ENCODE measurements at regions of chr7 and their contacts with region 1.

Region 1: DNA sequence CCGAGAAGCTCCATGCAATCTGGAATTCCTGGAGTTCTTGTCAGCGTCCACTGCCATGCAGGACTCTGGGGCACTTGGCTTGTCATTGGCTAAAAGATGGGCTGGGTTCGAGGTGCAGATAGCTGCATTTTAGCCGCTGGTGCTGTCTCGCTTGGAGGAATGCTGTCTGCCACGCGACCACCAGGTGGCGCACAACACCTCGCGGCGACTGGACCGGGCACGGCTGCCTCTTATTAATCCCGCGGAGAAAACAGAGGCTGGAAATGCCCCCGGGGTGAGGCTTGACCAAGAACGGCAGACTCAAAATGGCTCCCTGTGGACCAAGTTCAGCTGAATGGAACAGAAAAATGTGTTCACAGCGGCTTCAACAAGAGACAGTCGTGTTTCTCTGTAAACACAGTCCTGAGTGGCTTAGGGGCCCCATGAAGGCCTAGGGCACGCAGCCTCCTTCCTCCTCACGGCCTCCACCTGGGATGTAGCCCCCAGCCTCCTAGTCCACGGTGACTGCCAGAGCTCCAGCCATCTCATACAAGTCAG is 46.2 kb downstream of the AOC1 start:
- DNase-seq: peak; percentile 64
- H3K27ac ChIP-seq: no peak overlapping the region
- CTCF ChIP-seq: peak; percentile 98

Region 2: GRCh38 chr7:150408393-150409299 is 489.9 kb before region 1 on chr7:
- CTCF ChIA-PET with region 1: no interaction called
- POLR2A ChIA-PET with region 1: no interaction called
- DNase-seq: no peak
- H3K27ac ChIP-seq: peak overlapping the region; percentile 9; the same call in 1 of the 2 replicates
- CTCF ChIP-seq: no peak

Region 3: GRCh38 chr7:150918378-150918777 is 19.8 kb after region 1 on chr7:
- CTCF ChIA-PET with region 1: interaction called, 10 read pairs
- POLR2A ChIA-PET with region 1: no interaction called
- DNase-seq: no peak
- H3K27ac ChIP-seq: no peak overlapping the region
- CTCF ChIP-seq: no peak

Region 4: GRCh38 chr7:150986099-150986512 is 87.6 kb after region 1 on chr7:
- CTCF ChIA-PET with region 1: interaction called, 10 read pairs
- POLR2A ChIA-PET with region 1: no interaction called
- DNase-seq: peak; percentile 42
- H3K27ac ChIP-seq: no peak overlapping the region
- CTCF ChIP-seq: peak; percentile 84